Heart left ventricle (tissue), 16 donors: ENCODE measurements at regions of chr6 and their contacts with region 1.

Region 1: DNA sequence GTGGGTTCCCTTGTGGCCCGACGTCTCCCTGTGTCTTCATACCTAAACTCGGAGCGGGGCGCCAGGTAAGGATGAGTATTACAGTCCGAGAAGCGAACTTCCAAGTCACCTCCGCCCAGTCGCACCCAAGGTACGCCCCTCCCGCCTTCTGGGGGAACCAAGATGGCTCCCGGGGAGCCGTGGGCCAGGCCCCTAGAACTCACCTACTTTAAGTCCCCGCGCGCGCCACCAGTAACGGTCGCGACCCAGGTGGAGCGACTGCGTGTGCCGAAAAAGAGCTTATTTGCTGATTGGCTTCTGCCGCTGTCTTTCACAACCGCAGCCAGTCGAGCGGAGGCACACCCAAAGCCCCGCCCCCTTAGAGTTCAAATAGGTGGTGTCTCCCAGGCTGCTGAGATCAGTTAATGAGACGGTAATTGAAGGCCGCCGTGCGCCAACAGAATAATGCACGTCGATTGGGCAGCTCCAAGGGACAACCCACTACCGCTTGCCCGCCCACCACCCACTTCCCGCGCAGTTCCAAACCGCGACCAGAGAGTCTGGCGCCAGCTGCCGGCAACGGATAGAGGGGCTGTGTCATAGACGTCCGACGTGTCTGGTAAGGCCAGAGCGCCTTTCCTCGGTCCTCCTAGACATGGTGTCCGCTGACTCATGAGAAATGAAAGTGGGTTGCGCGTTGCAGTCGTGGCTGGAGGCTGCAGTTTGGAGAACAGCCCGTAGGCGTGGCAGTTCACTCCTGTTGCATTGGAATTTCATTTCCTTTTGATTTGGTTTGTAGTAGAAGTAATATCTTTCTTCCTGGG is at the start of gene MDC1:
- DNase-seq: peak; percentile 100
- ATAC-seq: peak; percentile 83 to 91 (median 87)
- H3K4me3 ChIP-seq: peak within 1 kb of the TSS; percentile 45 to 93 (median 73)
- H3K27ac ChIP-seq: peak within 1 kb of the TSS; percentile 80 to 97 (median 91)
- H3K4me1 ChIP-seq: peaks cover 0 to 40% (median 29%) of the 10 kb centered on the region in 12 donors
- H3K27me3 ChIP-seq: no peaks in the 10 kb centered on the region
- CTCF ChIP-seq: peak in 10 of 12 donors; percentile 4 to 50 (median 36)
- POLR2A ChIP-seq: peak; percentile 25 to 87
- total RNA-seq, gene MDC1: 10.6 to 25.0 (median 17.5) TPM

Region 2: GRCh38 chr6:30541515-30542403 is 175.5 kb before region 1 on chr6:
- intact Hi-C with region 1: loop called in 1 of 10 experiments (anchors 10 kb)
- DNase-seq: peak; percentile 69 to 86 (median 77)
- ATAC-seq: peak; percentile 63 to 82 (median 72)
- H3K4me3 ChIP-seq: peak overlapping the region in 11 of 12 donors; percentile 22 to 54 (median 44)
- H3K27ac ChIP-seq: peak overlapping the region; percentile 1 to 80 (median 63)
- H3K4me1 ChIP-seq: peaks cover 0 to 32% (median 9%) of the 10 kb centered on the region in 12 donors
- H3K27me3 ChIP-seq: no peaks in the 10 kb centered on the region
- CTCF ChIP-seq: peak; percentile 94 to 100 (median 99)
- POLR2A ChIP-seq: no peak

Region 3: DNA sequence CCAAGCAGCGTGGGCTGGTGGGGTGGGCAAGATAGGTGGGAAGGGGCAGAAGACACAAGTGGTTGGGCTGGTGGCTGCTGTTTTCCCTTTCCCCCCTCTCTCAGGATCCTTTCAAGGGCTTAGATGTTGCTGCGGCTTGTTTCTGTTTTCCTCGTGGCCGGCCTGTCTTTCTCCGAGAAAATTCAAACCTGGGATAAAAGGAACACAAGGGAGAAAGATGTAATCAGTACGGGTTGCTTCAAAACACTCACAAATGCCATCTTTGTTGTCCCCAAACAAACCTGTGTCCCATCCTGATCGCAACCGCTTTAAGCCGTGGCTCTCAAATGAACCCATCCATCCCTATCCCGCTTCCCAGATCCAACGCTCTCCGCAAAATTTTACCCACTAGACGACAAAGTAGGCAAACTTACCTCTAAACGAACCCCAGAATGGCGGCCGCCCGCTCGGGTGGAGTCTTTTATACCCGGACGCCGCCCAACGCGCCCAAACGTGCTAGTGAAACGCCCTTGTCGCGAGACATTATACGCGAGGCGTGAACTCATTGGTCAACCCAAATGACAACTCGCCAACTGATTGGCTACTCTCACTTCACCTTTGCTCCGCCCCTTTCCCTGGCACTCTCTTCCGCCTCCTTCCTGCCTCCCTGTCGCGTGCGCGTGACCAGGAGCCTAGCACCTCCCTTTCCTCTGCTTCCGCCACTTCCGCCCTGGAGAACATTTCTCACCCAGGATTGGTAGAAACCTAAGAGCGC is 100.3 kb before region 1 on chr6 and contains the start of gene PPP1R10:
- intact Hi-C with region 1: loop called in 8 of 10 experiments (anchors 1 to 5 kb)
- DNase-seq: peak; percentile 97 to 100 (median 100)
- ATAC-seq: peak; percentile 87 to 92 (median 92)
- H3K4me3 ChIP-seq: peak within 1 kb of the TSS; percentile 57 to 92 (median 78)
- H3K27ac ChIP-seq: peak within 1 kb of the TSS; percentile 94 to 99 (median 97)
- H3K4me1 ChIP-seq: peaks cover 0 to 42% (median 37%) of the 10 kb centered on the region in 12 donors
- H3K27me3 ChIP-seq: no peaks in the 10 kb centered on the region
- CTCF ChIP-seq: no peak
- POLR2A ChIP-seq: peak; percentile 99
- total RNA-seq, gene PPP1R10: 21.7 to 44.9 (median 29.9) TPM

Region 4: DNA sequence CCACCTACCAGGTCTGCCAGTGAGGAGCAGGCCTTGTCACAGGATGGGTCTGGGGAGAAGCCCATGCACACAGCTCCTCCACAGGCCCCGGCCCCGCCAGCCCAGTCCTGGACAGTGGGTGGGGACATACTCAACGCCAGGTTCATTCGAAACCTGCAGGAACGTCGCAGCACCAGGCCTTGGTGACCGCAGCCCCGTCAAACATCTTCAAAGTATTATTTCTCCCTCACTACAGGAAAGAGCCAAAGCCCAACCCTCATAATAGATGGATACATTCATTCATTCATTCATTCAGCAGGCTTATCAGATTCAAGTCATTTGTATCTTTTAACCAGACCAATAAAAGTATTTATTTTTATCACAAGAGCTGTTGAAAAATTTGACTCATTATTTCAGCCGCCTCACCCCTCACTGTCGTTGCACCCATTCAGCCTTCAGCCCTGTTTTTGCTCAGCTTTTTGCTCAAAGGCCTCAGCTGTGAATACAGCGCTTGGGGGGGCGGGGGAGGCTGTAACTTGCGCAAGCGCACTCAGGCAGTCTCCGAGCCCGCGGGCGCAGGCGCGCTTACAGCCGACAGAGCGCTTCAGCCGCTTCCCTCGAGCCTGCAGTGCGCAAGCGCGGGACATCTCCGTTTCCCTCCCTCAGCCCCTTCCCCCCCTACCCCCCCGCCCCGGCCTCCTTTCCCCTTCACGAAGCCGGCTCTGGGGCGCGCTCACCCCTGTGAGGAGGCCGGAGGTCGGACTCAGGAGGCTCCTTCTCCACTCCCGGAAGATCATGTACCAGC is 70.6 kb before region 1 on chr6 and contains the start of gene C6orf136:
- intact Hi-C with region 1: no loop called
- DNase-seq: peak; percentile 91 to 97 (median 95)
- ATAC-seq: peak; percentile 89 to 95 (median 90)
- H3K4me3 ChIP-seq: peak within 1 kb of the TSS; percentile 69 to 100 (median 90)
- H3K27ac ChIP-seq: peak within 1 kb of the TSS; percentile 90 to 99 (median 96)
- H3K4me1 ChIP-seq: peaks cover 0 to 33% (median 13%) of the 10 kb centered on the region in 12 donors
- H3K27me3 ChIP-seq: no peaks in the 10 kb centered on the region
- CTCF ChIP-seq: no peak
- POLR2A ChIP-seq: peak in 1 of 2 donors; percentile 20
- total RNA-seq, gene C6orf136: 27.9 to 58.9 (median 47.4) TPM

Region 5: GRCh38 chr6:30686908-30687658 is 30.2 kb before region 1 on chr6:
- intact Hi-C with region 1: loop called in 9 of 10 experiments (anchors 1 to 2 kb)
- DNase-seq: peak; percentile 97 to 99 (median 98)
- ATAC-seq: peak; percentile 71 to 85 (median 79)
- H3K4me3 ChIP-seq: peak overlapping the region; percentile 52 to 96 (median 74)
- H3K27ac ChIP-seq: peak overlapping the region; percentile 92 to 100 (median 98)
- H3K4me1 ChIP-seq: peaks cover 4 to 78% (median 46%) of the 10 kb centered on the region in 12 donors
- H3K27me3 ChIP-seq: no peaks in the 10 kb centered on the region
- CTCF ChIP-seq: no peak
- POLR2A ChIP-seq: no peak